Keratinocyte (primary cell): ENCODE measurements at regions of chr1 and their contacts with region 1.

Region 1: GRCh38 chr1:29688471-29689365 is 452.4 kb downstream of the PTPRU start:
- DNase-seq: no peak
- H3K4me3 ChIP-seq: no peak overlapping the region
- H3K27ac ChIP-seq: no peak overlapping the region
- H3K4me1 ChIP-seq: peaks cover 23% of the 10 kb centered on the region
- H3K27me3 ChIP-seq: peaks cover 14% of the 10 kb centered on the region
- CTCF ChIP-seq: no peak

Region 2: GRCh38 chr1:29513357-29513756 is 175.4 kb before region 1 on chr1:
- dilution Hi-C with region 1: loop called (anchors 10 kb)
- DNase-seq: no peak
- H3K4me3 ChIP-seq: no peak overlapping the region
- H3K27ac ChIP-seq: no peak overlapping the region
- H3K4me1 ChIP-seq: no peaks in the 10 kb centered on the region
- H3K27me3 ChIP-seq: peaks cover 6% of the 10 kb centered on the region
- CTCF ChIP-seq: peak; percentile 84 to 96 (median 90)